Spleen (tissue), 13 donors: ENCODE measurements at regions of chr4 and their contacts with region 1.

Region 1: DNA sequence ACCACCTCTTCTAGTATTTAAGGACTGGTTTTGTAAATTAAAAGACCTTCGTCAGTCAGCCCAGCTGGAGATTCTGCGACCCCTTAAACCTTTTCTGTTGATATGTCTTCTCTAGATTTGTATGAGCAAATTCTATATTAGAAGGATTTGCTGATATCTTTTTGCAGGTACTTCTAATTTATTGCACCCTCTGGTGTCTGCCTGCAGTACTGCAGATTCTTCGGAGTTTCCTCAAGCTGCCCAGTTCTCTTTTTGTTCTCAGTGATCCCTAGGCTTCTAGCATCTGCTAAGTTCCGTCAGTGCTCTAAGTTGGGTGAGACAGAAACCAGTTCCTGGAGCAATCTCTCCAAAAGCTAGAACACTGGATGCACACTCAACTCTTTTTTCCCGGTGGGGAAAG is 545.2 kb downstream of the C4orf33 start:
- DNase-seq: no peak
- H3K4me3 ChIP-seq: no peak overlapping the region
- H3K27ac ChIP-seq: no peak overlapping the region
- H3K4me1 ChIP-seq: no peaks in the 10 kb centered on the region
- H3K27me3 ChIP-seq: no peaks in the 10 kb centered on the region
- CTCF ChIP-seq: peak; percentile 34 to 85 (median 73)
- POLR2A ChIP-seq: no peak

Region 2: GRCh38 chr4:129344058-129344457 is 297.1 kb before region 1 on chr4:
- intact Hi-C with region 1: no loop called
- DNase-seq: no peak
- H3K4me3 ChIP-seq: no peak overlapping the region
- H3K27ac ChIP-seq: no peak overlapping the region
- H3K4me1 ChIP-seq: peaks cover 0 to 21% (median 10%) of the 10 kb centered on the region in 6 donors
- H3K27me3 ChIP-seq: no peaks in the 10 kb centered on the region
- CTCF ChIP-seq: peak in 8 of 11 experiments; percentile 11 to 62 (median 48)
- POLR2A ChIP-seq: no peak

Region 3: DNA sequence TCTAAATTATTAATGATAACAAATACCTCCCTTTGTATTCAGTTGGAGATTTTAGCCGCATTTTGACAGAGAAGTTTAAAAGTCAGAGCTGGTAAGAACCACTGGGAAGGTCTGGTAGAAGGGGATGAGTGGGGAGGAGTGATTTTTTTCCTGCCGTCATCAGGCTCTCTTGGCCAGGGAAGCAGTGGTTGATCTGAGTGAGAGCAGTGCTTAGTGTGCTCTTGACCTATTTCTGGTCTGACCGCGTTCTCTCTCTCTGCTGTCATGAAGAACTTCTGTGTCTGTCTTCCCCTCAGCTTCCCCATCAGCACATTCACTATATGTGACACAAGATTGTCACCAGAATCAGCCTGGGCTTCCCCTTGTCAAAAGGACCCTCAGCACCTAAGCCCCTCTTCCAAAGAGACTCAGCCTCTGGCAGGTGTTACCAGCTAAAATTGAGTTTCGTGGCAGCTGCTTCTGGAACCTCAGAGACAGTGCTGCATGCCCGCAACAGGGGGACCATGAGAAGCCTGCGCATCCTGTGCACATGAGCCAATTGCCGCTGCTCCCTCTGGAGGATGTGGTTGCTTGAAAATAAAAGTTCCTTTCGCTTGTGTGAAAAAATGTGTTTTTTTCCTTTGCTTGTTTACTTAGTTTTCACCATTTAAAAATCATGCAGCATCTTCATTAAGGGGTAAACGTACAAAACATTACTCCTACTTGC is 276.3 kb before region 1 on chr4:
- intact Hi-C with region 1: loop called (anchors 5 kb)
- DNase-seq: no peak
- H3K4me3 ChIP-seq: no peak overlapping the region
- H3K27ac ChIP-seq: no peak overlapping the region
- H3K4me1 ChIP-seq: no peaks in the 10 kb centered on the region
- H3K27me3 ChIP-seq: peaks cover 0 to 6% (median 0%) of the 10 kb centered on the region in 7 donors
- CTCF ChIP-seq: no peak
- POLR2A ChIP-seq: no peak

Region 4: GRCh38 chr4:129526814-129527213 is 114.4 kb before region 1 on chr4:
- intact Hi-C with region 1: loop called (anchors 5 kb)
- DNase-seq: no peak
- H3K4me3 ChIP-seq: no peak overlapping the region
- H3K27ac ChIP-seq: no peak overlapping the region
- H3K4me1 ChIP-seq: no peaks in the 10 kb centered on the region
- H3K27me3 ChIP-seq: no peaks in the 10 kb centered on the region
- CTCF ChIP-seq: peak in 4 of 11 experiments; percentile 16 to 32 (median 20)
- POLR2A ChIP-seq: no peak

Region 5: DNA sequence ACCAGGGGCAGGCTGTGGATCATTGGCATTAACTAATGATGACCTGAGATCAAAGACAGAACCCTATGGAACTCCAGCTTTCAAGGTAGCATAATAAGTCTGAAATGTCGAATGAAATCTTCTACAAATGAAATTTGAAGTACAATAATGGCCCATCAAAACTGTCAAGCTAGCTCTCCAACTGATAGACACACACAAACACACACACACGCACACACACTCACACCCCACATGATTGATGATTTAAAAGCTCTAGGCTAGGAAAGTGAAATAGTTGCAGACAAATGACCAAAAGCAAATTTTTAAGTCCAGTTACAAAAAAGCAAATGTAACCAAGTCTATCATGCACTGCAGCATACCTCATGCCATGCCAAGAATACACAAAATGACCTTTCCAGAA is 110.5 kb after region 1 on chr4:
- intact Hi-C with region 1: no loop called
- DNase-seq: no peak
- H3K4me3 ChIP-seq: no peak overlapping the region
- H3K27ac ChIP-seq: no peak overlapping the region
- H3K4me1 ChIP-seq: no peaks in the 10 kb centered on the region
- H3K27me3 ChIP-seq: no peaks in the 10 kb centered on the region
- CTCF ChIP-seq: no peak
- POLR2A ChIP-seq: no peak

Region 6: DNA sequence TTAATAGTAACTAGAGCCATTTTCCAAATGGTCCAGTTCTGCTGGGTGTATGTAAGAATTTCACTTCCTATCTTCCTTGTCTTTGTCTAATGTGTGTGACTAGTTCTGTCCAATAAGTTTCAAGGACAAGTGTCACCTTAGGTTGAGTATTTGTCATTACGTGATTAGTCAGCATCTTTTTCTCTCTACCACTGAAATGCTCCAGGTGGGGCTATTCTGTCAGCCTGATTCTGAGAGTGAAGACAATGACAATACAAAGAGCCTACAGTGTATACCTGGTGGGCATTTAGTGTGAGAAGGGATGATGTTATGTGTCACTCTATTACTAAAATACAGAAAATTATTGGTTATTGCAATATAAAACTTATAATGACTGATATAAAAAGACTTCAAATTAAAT is 331.1 kb after region 1 on chr4:
- intact Hi-C with region 1: no loop called
- DNase-seq: no peak
- H3K4me3 ChIP-seq: no peak overlapping the region
- H3K27ac ChIP-seq: no peak overlapping the region
- H3K4me1 ChIP-seq: no peaks in the 10 kb centered on the region
- H3K27me3 ChIP-seq: no peaks in the 10 kb centered on the region
- CTCF ChIP-seq: no peak
- POLR2A ChIP-seq: no peak